Activated CD4-positive, alpha-beta memory T cell treated with anti-CD3 and anti-CD28 coated beads for 36 hours (primary cell): ENCODE measurements at regions of chr7 and their contacts with region 1.

Region 1: GRCh38 chr7:35424869-35425495 is 171.1 kb upstream of the TBX20 start:
- DNase-seq: peak; percentile 64
- H3K4me3 Mint-ChIP-seq: no peak overlapping the region
- H3K27ac Mint-ChIP-seq: no peak overlapping the region
- H3K4me1 Mint-ChIP-seq: no peaks in the 10 kb centered on the region
- H3K27me3 Mint-ChIP-seq: peaks cover 7% of the 10 kb centered on the region

Region 2: GRCh38 chr7:35519971-35520809 is 95.2 kb after region 1 on chr7:
- CTCF ChIA-PET with region 1: interaction called, 23 read pairs
- POLR2A ChIA-PET with region 1: no interaction called
- intact Hi-C with region 1: loop called (anchors 1 kb)
- DNase-seq: peak; percentile 64
- H3K4me3 Mint-ChIP-seq: no peak overlapping the region
- H3K27ac Mint-ChIP-seq: no peak overlapping the region
- H3K4me1 Mint-ChIP-seq: no peaks in the 10 kb centered on the region
- H3K27me3 Mint-ChIP-seq: peaks cover 8% of the 10 kb centered on the region

Region 3: GRCh38 chr7:35537067-35538023 is 112.4 kb after region 1 on chr7:
- CTCF ChIA-PET with region 1: interaction called, 12 read pairs
- POLR2A ChIA-PET with region 1: no interaction called
- intact Hi-C with region 1: loop called (anchors 1 kb)
- DNase-seq: peak; percentile 80
- H3K4me3 Mint-ChIP-seq: peak overlapping the region; percentile 61
- H3K27ac Mint-ChIP-seq: no peak overlapping the region
- H3K4me1 Mint-ChIP-seq: peaks cover 2% of the 10 kb centered on the region
- H3K27me3 Mint-ChIP-seq: peaks cover 7% of the 10 kb centered on the region